ENCODE measurements at regions of chr5 and their contacts with region 1.

Region 1: DNA sequence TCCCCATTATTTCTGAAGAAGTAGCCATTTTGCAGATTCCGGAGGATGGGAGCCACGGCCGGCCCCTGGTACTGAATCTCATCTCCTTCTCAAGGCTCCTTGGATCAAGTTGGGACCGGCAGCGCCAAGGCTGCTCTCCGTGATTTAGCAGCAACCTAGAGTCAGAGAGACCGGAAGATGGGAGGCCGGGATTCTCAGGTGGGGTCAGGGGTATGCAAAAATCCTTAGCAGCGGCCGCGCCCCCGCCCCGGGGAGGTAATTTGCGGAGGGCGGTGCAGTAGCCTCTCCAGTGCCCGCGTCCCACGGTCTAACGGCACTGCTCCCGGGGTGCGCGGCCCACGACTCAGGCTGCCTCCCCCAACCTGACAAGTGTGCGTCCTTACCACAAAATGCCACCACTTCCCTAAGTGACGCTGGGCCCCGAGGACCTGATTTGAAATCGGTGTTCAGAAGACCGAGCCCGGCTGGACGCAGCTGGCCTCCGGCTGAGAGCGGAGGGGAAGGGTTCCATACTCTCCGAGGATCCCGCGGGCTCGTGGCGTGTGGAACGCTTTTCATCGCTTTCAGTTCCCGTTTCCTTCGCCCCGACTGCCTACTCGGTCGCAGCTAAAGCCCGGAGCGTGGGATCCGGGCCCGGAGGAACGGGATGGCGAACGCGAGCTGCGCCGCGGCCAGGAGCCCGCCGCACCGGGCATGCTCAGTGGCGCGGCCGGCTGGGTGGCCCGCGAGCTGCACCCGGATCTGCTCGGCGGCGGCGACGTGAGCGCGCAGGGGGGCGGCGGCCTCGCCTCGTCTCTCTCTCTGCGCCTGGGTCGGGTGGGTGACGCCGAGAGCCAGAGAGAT is at the start of gene SCAMP1:
- DNase-seq: peak; percentile 95 to 96
- ATAC-seq: peak; percentile 83 to 94 (median 88)
- H3K4me3 ChIP-seq: peak within 1 kb of the TSS; percentile 99
- H3K4me3 Mint-ChIP-seq: peak within 1 kb of the TSS; percentile 98
- H3K27ac ChIP-seq: peak within 1 kb of the TSS; percentile 96
- H3K27ac Mint-ChIP-seq: peak within 1 kb of the TSS; percentile 90 to 96
- H3K4me1 ChIP-seq: peaks cover 20% of the 10 kb centered on the region
- H3K4me1 Mint-ChIP-seq: peaks cover 45 to 58% of the 10 kb centered on the region in 2 donors
- H3K27me3 ChIP-seq: no peaks in the 10 kb centered on the region
- H3K27me3 Mint-ChIP-seq: no peaks in the 10 kb centered on the region
- CTCF ChIP-seq: no peak
- total RNA-seq, gene SCAMP1: 19.9 to 27.1 (median 20.5) TPM

Region 2: DNA sequence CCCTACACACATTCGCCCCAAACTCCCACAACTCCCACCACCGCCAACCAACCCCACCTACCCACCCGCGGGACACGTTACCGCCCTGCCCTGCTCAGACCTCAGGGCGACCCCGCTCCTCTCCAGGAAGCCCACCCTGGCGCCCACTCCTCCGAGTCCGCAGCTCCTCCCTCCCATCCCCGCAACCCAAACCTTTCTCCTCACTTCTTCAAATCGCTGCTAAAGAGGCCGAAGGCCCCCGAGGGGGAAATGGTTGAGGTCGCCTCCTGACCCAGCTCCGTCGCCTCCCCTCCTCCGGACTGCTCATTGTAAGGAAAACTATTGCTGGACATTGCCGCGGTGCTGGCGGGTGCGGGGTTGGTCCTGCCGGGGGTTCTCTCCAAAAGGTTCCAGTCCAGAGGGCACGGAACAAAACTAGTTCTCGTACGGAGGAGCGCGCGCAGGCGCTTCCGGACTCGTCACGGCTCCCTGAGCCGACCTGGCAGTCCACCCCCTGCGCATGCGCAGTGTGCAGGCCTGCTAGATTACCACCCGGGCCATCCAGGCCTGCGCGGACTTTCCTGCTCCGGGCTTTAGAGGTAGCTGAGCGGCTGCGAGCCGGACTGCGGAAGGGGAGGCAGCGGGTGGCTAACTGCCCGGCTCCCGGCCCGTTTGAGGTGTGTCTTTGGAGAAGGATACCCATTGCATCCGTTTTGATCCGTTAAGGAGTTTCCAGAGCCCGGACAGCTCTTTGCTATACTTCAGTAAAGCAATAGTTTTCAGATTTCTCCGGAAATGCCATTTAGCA is 65.6 kb before region 1 on chr5 and contains the start of gene AP3B1:
- intact Hi-C with region 1: loop called (anchors 1 kb)
- DNase-seq: peak; percentile 98 to 99
- ATAC-seq: peak; percentile 92 to 99 (median 96)
- H3K4me3 ChIP-seq: peak within 1 kb of the TSS; percentile 100
- H3K4me3 Mint-ChIP-seq: peak within 1 kb of the TSS; percentile 100
- H3K27ac ChIP-seq: peak within 1 kb of the TSS; percentile 99
- H3K27ac Mint-ChIP-seq: peak within 1 kb of the TSS; percentile 99
- H3K4me1 ChIP-seq: peaks cover 13% of the 10 kb centered on the region
- H3K4me1 Mint-ChIP-seq: peaks cover 52% of the 10 kb centered on the region in 2 donors
- H3K27me3 ChIP-seq: no peaks in the 10 kb centered on the region
- H3K27me3 Mint-ChIP-seq: no peaks in the 10 kb centered on the region
- CTCF ChIP-seq: no peak
- total RNA-seq, gene AP3B1: 48.5 to 58.2 (median 56.2) TPM

Region 3: GRCh38 chr5:78308703-78309102 is 51.3 kb before region 1 on chr5:
- intact Hi-C with region 1: no loop called
- DNase-seq: no peak
- ATAC-seq: no peak
- H3K4me3 ChIP-seq: no peak overlapping the region
- H3K4me3 Mint-ChIP-seq: no peak overlapping the region
- H3K27ac ChIP-seq: no peak overlapping the region
- H3K27ac Mint-ChIP-seq: no peak overlapping the region
- H3K4me1 ChIP-seq: no peaks in the 10 kb centered on the region
- H3K4me1 Mint-ChIP-seq: no peaks in the 10 kb centered on the region
- H3K27me3 ChIP-seq: no peaks in the 10 kb centered on the region
- H3K27me3 Mint-ChIP-seq: peaks cover 21 to 24% of the 10 kb centered on the region in 2 donors
- CTCF ChIP-seq: no peak

Measured in natural killer cell (primary cell).